RWPE1 (cell line): ENCODE measurements at regions of chr5 and their contacts with region 1.

Region 1: GRCh38 chr5:91383027-91383955 is at the start of gene ARRDC3:
- DNase-seq: peak; percentile 97
- H3K27ac ChIP-seq: peak within 1 kb of the TSS; percentile 98
- CTCF ChIP-seq: no peak

Region 2: GRCh38 chr5:90866333-90866732 is 517.0 kb before region 1 on chr5:
- CTCF ChIA-PET with region 1: interaction called, 25 read pairs
- POLR2A ChIA-PET with region 1: no interaction called
- DNase-seq: peak; percentile 58
- H3K27ac ChIP-seq: no peak overlapping the region
- CTCF ChIP-seq: peak; percentile 69

Region 3: GRCh38 chr5:91095313-91095712 is 288.0 kb before region 1 on chr5:
- CTCF ChIA-PET with region 1: interaction called, 10 read pairs
- POLR2A ChIA-PET with region 1: no interaction called
- DNase-seq: no peak
- H3K27ac ChIP-seq: no peak overlapping the region
- CTCF ChIP-seq: no peak

Region 4: DNA sequence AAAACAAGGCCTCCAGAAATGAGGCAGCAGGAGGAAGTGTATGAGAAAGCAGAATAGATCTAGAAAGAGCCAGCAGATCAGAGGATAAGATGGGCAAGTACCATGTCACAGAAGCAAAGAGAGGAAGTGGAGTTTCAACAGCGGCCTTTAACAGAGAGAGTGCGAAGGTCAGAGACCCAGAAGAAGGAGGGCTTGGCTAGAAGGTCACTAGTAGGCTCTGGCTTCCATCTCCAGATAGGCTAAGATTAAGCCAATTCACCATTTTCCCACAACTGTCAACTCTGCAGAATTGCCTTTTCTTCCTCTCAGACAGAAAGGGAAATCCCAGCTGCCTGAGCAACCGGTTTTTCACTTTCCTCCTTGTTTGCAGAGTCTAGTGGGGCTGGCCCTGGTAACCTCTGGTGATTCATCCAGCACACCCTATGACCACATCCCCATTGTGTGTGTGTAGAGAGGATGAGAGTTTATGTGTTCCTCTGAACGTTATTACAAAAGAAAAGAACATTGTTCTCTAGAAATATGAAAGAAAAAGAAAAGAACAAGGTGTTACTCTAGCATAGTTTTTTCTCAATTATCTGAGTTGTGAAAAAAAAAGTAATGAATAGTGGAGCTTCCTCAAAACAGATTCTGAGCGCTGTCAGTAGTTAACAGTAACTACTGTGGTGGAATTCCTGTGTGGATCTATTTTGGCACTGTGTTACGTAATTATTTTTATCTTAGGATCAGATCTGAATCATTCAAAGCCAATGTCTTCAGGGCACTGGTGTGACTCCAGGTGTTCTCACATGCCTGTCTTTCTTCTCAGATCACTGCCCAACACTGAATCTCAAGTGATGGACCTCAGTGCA is 220.5 kb before region 1 on chr5:
- CTCF ChIA-PET with region 1: no interaction called
- POLR2A ChIA-PET with region 1: no interaction called
- DNase-seq: peak; percentile 95
- H3K27ac ChIP-seq: peak overlapping the region; percentile 78
- CTCF ChIP-seq: no peak

Region 5: DNA sequence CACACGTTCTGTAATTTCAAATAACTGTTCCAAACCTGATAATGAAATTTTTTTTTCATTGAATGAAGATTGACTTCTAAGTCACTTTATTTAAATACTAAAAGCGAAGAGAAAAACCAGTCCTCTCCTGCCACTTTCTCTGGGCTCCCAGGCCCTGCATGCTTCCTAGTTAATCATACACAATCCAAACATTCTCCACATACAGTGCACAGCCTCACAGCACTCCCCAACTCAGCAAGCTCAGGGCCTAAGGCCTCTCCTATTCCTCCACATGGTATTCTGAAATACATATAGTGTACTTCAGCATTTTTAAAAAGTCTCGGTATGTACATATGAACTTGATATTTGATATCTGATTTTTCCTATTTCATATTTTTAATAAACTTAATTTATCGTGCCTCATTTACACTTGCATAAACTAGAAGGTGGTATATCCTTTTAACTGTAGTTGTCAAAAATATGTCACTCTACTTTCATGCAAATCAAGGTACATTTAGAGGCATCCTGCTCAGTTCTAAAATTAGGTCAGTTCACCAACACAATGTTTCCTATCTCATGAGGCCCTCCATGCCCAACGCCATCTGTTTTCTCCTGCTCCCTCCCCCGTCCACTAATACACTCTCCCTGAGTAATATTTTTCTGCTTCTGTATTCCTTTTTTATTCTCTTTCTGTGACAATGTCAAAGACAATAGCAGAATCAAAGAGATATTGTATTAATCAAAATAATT is 206.8 kb before region 1 on chr5:
- CTCF ChIA-PET with region 1: no interaction called
- POLR2A ChIA-PET with region 1: no interaction called
- DNase-seq: no peak
- H3K27ac ChIP-seq: no peak overlapping the region
- CTCF ChIP-seq: no peak

Region 6: DNA sequence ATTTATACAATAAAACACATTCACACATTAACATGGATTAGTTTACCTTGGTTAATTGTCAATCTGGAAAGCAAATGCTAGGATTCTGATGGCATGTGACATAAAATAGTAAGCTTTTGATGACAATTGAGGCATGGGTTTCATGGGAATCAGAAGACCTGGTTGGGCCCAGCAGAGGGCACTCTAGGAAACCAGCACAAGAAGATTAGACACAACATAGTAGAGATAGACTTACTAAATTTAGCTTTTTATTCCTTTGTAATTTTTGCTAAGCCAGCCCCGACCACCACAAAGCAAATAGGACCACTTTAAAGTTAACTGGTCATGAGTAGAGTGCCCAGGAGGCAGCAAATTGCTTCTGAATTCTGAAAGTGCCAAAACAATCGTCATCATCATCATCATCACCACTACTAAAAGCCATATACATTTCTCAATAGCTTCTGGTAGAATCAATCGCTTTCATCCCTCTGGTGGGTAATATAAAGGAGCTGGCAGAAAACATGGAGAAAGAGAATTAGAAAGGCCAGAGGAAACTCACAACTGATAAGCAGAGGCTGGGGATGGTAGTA is 163.4 kb before region 1 on chr5:
- CTCF ChIA-PET with region 1: interaction called, 16 read pairs
- POLR2A ChIA-PET with region 1: interaction called, 4 read pairs
- DNase-seq: no peak
- H3K27ac ChIP-seq: peak overlapping the region; percentile 35; the same call in 1 of the 2 replicates
- CTCF ChIP-seq: no peak

Region 7: DNA sequence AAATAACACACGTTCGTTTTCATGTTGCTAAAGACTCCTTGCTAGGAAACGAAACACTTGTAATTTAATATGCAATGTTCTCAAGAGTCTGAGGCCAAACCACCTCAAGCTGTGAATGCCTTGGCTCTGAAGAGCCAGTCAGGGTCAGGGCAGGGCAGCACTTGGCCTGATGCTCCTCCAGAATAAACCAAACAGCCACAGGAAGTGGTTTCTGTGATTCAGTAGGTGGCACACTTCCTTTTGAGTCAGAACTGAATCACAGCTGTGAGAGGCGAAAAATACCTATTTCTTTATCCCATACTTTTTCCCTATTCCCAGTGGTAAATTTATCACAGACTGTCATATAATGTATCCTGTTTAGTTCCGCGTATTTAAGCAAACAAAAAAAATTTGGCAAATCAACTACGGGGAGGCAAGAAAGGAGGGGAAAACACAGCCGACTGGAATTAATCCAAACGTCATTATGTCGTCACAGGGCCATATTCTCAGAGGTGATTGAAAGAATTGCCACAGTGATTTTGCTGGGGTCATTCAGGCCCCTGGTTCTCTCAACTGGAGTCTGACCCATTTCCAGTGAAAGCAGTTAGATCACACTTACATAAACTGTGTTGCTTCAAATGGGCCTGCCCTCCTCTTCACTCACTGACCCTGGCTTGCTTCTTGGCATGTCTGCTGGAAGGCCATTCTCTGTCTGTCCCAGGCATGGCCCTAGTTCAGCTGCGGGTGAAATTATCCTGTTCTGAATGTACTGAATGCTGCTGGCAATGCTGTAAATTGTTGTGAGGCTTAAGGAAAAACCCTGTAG is 71.4 kb before region 1 on chr5:
- CTCF ChIA-PET with region 1: interaction called, 6 read pairs
- POLR2A ChIA-PET with region 1: interaction called, 19 read pairs
- DNase-seq: peak; percentile 98
- H3K27ac ChIP-seq: peak overlapping the region; percentile 87
- CTCF ChIP-seq: no peak

Region 8: GRCh38 chr5:91514400-91514799 is 131.1 kb after region 1 on chr5:
- CTCF ChIA-PET with region 1: no interaction called
- POLR2A ChIA-PET with region 1: no interaction called
- DNase-seq: no peak
- H3K27ac ChIP-seq: no peak overlapping the region
- CTCF ChIP-seq: no peak